ENCODE measurements at regions of chr22 and their contacts with region 1.

Region 1: DNA sequence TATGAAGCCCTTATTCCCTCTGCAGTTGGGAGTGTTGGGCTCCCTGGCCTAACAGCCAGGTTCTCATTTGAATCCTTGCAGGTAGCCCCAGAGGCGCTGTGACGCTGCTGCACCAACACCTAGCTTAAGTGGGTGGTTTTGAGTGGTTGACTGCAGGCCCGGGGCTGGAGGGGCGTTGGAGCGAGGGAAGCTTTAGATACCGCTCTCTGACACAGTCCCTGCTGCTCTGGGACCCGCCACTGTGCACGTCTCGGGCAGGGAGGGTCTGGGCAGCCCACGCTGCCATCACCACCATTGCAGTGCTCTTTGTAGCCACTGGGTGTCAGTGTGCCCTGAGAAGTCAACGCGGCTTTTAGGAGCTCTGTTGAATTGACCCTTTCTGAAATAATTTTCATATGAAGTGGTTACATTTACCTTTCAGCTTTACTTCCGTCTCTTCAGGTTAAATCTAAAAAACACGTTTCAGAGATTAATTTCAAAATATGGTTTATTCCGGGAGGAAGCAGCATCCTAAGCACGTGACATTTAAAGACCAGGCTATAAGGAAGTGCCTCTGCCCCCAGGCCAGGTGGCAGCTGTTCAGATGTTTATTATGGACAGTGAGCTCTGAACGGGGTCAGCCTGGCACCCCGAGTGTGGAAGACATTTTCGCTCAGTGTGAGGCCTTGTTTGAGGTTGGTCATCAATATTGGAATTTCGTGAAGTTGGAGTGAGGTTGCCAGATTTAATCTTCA is 30.9 kb upstream of the PARVB start:
- DNase-seq: peak; percentile 78
- H3K4me3 ChIP-seq: no peak overlapping the region
- H3K27ac ChIP-seq: peak overlapping the region; percentile 82
- H3K4me1 ChIP-seq: peaks cover 16% of the 10 kb centered on the region
- H3K27me3 ChIP-seq: no peaks in the 10 kb centered on the region

Region 2: DNA sequence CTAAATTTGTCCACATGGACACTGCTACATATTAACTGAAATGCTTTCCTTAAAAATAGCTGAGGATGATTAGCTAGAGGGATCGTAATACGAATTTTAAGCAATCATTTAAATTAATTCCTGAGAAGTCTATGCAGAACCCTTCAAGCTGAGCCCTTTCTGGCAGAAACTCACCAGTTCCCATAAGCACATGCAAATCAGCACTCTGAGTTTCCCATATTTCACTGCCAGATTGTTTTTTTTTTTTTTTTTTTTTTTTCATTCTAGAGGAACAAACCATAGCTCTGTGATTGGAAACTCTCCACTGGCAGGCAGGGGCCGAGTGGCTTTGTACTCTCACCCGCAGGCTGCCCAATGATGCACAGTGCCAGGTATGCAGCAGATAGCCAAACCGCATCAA is 326.7 kb before region 1 on chr22:
- in situ Hi-C with region 1: no loop called
- DNase-seq: no peak
- H3K4me3 ChIP-seq: no peak overlapping the region
- H3K27ac ChIP-seq: no peak overlapping the region
- H3K4me1 ChIP-seq: no peaks in the 10 kb centered on the region
- H3K27me3 ChIP-seq: no peaks in the 10 kb centered on the region

Region 3: GRCh38 chr22:44080936-44081861 is 88.0 kb after region 1 on chr22:
- in situ Hi-C with region 1: loop called (anchors 10 kb)
- DNase-seq: peak; percentile 79
- H3K4me3 ChIP-seq: no peak overlapping the region
- H3K27ac ChIP-seq: no peak overlapping the region
- H3K4me1 ChIP-seq: peaks cover 9% of the 10 kb centered on the region
- H3K27me3 ChIP-seq: no peaks in the 10 kb centered on the region